Ovary (tissue), 10 donors: ENCODE measurements at regions of chr12 and their contacts with region 1.

Region 1: GRCh38 chr12:83700838-83701237 is 1014.1 kb downstream of the TMTC2 start:
- DNase-seq: no peak
- H3K4me3 ChIP-seq: no peak overlapping the region
- H3K27ac ChIP-seq: no peak overlapping the region
- H3K4me1 ChIP-seq: no peaks in the 10 kb centered on the region
- H3K27me3 ChIP-seq: no peaks in the 10 kb centered on the region
- CTCF ChIP-seq: no peak
- EP300 ChIP-seq: no peak
- POLR2A ChIP-seq: no peak

Region 2: DNA sequence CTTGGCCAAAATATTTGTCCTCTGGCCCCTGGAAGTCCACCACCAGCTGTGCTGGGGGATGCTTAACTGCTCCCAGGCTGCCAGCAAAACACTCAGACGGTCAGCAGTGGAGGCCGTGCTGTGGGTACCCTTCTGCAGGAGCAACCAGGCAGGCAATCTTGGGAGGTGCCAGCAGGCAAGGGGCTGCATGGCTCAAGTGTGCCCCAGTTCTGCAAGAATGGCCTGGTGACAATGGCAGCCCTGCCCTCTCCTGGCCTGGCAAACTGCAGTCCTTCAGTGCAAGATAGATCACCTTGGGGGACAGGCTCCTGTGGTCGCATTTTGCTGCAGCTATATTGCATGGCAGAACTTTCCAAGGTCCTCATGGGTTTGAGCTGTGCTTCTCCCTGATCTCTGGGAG is 285.9 kb before region 1 on chr12:
- intact Hi-C with region 1: loop called in 1 of 4 experiments (anchors 5 kb)
- DNase-seq: no peak
- H3K4me3 ChIP-seq: no peak overlapping the region
- H3K27ac ChIP-seq: no peak overlapping the region
- H3K4me1 ChIP-seq: no peaks in the 10 kb centered on the region
- H3K27me3 ChIP-seq: no peaks in the 10 kb centered on the region
- CTCF ChIP-seq: no peak
- EP300 ChIP-seq: no peak
- POLR2A ChIP-seq: no peak